ENCODE measurements at regions of chr11 and their contacts with region 1.

Region 1: GRCh38 chr11:122863704-122864326 is 18.7 kb upstream of the JHY start:
- DNase-seq: peak; percentile 63
- H3K4me3 Mint-ChIP-seq: no peak overlapping the region
- H3K27ac Mint-ChIP-seq: no peak overlapping the region
- H3K4me1 Mint-ChIP-seq: no peaks in the 10 kb centered on the region
- H3K27me3 Mint-ChIP-seq: peaks cover 27% of the 10 kb centered on the region

Region 2: DNA sequence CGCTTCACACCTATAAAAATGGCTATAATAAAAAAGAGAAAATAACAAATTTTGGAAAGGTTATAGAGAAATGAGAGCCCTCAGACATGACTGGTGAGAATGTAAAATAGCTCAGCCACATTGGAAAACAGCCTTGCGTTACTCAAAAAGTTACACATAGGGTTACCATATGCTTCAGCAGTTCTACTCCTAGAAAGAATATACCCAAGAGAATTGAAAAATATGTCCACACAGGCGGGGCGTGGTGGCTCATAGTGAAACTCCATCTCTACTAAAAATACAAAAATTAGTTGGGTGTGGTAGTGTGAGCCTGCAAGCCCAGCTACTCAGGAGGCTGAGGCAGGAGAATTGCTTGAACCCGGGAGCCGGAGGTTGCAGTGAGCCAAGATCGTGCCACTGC is 11.2 kb after region 1 on chr11:
- CTCF ChIA-PET with region 1: interaction called, 13 read pairs
- POLR2A ChIA-PET with region 1: no interaction called
- intact Hi-C with region 1: no loop called
- DNase-seq: no peak
- H3K4me3 Mint-ChIP-seq: no peak overlapping the region
- H3K27ac Mint-ChIP-seq: no peak overlapping the region
- H3K4me1 Mint-ChIP-seq: peaks cover 4% of the 10 kb centered on the region
- H3K27me3 Mint-ChIP-seq: peaks cover 2% of the 10 kb centered on the region

Region 3: DNA sequence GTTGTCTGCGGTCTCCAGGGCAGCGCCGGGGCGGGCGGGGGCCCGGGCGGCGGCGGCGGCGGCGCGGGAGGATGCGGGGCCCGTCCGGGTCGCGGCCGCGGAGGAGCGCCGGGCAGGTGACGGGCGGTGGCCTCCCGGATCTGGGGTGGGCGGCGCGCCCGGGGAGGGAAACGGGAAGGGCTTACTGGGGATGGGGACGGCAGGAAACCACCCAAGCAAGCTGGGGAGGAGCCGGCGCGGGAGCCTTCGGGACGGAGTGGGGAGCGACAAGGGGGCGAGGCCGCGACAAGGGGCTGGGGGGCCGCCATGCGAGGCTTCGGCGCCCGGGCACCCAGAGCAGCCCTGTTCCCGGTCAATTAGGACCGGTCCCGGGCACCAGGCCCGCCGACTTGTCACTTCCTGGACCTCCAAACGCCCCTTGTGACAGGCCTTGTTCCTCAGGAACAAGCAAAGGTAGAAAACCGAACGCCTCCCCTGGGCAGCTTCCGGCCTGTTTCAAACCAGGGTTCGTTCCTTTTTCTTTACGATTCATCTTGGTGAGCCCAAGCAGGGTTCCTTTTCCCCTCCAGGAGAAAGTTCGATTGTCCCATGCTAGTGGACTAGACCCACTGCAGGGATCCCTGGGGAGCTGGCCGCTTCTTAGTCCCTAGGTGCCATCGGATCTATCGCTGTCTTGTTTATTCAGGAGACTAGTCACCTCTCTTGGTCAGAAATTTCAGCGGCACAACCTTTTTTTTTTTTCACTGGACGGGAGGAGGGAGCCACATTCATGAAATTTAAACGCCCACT is 19.2 kb after region 1 on chr11:
- CTCF ChIA-PET with region 1: interaction called, 12 read pairs
- POLR2A ChIA-PET with region 1: no interaction called
- intact Hi-C with region 1: no loop called
- DNase-seq: peak; percentile 63
- H3K4me3 Mint-ChIP-seq: peak overlapping the region; percentile 78
- H3K27ac Mint-ChIP-seq: peak overlapping the region; percentile 64
- H3K4me1 Mint-ChIP-seq: peaks cover 25% of the 10 kb centered on the region
- H3K27me3 Mint-ChIP-seq: no peaks in the 10 kb centered on the region